Motor neuron (in vitro differentiated cells): ENCODE measurements at regions of chr12 and their contacts with region 1.

Region 1: DNA sequence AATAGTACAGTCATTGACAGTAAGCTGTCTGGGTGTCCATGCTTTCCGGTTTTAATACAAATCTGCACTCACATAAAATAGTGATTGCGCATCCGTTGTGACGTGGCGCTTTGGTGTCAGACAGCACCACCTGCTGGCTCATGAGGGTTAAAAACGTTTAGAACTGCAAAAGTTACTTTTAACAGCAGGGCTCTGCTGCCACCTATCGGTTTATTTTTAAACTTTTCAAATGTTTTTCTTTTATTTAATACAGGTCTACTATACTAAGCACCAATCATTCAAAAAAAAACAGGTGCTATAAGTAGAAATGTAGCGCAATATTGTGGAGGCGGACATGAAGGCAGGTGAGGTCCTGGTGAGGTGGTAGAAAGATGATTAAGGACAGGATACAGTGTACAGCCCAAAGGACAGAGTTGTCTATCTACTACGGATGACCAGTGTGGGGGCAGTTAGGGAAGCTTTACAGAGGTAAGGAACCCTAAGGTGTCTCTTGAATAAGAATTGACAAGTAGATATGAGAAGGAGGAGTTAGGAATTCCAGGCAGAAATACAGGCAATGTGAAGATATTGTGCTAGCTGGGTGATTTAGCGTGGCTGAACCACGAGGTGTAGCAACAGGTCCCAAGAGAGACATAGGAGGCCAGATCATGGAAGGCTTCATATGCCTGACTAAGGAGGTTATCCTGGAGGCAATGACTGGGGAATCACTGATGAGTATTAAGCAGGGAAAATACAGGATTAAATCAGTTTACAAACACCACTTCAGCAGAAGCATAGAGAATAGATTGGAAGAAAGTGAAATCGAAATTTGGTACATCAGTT is 91.5 kb upstream of the PRB2 start:
- ATAC-seq: peak; percentile 78 to 95 (median 88)
- H3K4me3 ChIP-seq: no peak overlapping the region
- H3K27ac ChIP-seq: no peak overlapping the region
- H3K4me1 ChIP-seq: no peaks in the 10 kb centered on the region

Region 2: DNA sequence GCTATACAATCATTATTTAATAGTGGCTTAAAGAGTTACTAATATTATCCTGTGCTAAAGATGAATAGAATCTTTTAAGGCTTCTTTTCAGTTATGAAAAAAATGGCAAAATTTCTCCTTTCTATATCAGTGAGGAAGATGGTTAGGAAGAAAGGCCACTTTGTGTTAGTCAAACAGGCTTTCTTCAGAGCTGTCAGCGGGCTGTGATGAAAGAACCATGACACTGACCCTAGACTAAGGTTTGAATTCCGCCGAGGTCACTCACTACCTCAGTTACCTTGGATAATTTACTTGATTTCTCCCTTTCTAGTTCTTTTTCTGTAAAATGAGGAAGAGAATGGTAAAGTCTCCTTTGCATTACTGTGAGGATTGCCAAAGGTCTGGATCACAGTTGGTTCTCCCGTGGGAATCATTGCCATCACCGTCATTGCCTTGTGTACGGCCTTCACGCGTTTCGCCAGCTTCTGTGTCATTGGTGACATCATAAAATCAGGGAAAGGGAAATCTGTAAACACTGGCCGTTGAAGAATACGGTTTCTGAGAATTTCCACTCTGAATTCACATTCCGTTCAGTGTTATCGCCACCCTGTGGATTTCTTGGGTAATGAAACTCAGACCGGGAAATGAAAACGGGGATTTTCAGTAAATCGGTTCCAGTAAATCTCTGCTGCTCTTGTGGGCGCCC is 737.0 kb before region 1 on chr12:
- in situ Hi-C with region 1: loop called in 4 of 9 experiments (anchors 25 kb)
- ATAC-seq: peak; percentile 95 to 99 (median 98)
- H3K4me3 ChIP-seq: peak overlapping the region; percentile 6 to 21 (median 10)
- H3K27ac ChIP-seq: no peak overlapping the region
- H3K4me1 ChIP-seq: peaks cover 0 to 2% of the 10 kb centered on the region in 2 donors

Region 3: DNA sequence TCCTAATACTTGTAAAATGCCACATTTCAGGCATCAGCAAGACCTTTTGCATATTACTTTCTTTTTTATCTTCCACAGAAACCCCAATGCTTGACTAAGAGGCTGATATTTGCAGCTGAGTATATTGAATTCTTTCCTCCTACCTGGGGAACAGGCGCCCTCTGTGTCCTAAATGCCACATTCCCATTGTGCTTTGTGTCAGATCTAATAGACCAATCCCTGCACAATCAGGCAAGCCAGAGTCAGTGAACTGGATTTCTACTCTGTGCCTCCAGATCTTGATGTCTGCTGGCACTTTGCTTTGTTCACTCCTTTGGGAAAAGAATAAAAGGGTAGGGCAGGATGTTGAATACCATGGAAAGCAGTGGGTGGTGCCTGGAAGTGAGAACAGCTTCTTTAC is 277.7 kb before region 1 on chr12:
- in situ Hi-C with region 1: no loop called
- ATAC-seq: peak in 1 of 8 experiments; percentile 16
- H3K4me3 ChIP-seq: no peak overlapping the region
- H3K27ac ChIP-seq: no peak overlapping the region
- H3K4me1 ChIP-seq: no peaks in the 10 kb centered on the region

Region 4: GRCh38 chr12:11238275-11238674 is 248.6 kb before region 1 on chr12:
- in situ Hi-C with region 1: loop called in 3 of 9 experiments (anchors 10 kb)
- ATAC-seq: no peak
- H3K4me3 ChIP-seq: no peak overlapping the region
- H3K27ac ChIP-seq: no peak overlapping the region
- H3K4me1 ChIP-seq: no peaks in the 10 kb centered on the region